H1 (cell line): ENCODE measurements at regions of chr1 and their contacts with region 1.

Region 1: GRCh38 chr1:203267347-203267846 is 37.9 kb upstream of the BTG2 start:
- DNase-seq: peak; percentile 50 to 89
- H3K4me3 ChIP-seq: peak overlapping the region; percentile 50 to 70 (median 56)
- H3K27ac ChIP-seq: no peak overlapping the region
- H3K4me1 ChIP-seq: peaks cover 0 to 3% (median 1%) of the 10 kb centered on the region in 4 experiments; a peak in 2 of 7 replicates
- H3K27me3 ChIP-seq: peaks cover 0 to 4% (median 2%) of the 10 kb centered on the region in 4 experiments; a peak in 4 of 7 replicates
- CTCF ChIP-seq: peak; percentile 42 to 90 (median 87)
- EP300 ChIP-seq: no peak
- POLR2A ChIP-seq: no peak
- RAD21 ChIP-seq: peak; percentile 75 to 85

Region 2: GRCh38 chr1:203057911-203058675 is 209.3 kb before region 1 on chr1:
- CTCF ChIA-PET with region 1: interaction called, 48 read pairs
- POLR2A ChIA-PET with region 1: no interaction called
- DNase-seq: no peak
- H3K4me3 ChIP-seq: no peak overlapping the region
- H3K27ac ChIP-seq: no peak overlapping the region
- H3K4me1 ChIP-seq: peaks cover 10 to 23% (median 17%) of the 10 kb centered on the region in 4 experiments
- H3K27me3 ChIP-seq: no peaks in the 10 kb centered on the region
- CTCF ChIP-seq: no peak
- EP300 ChIP-seq: no peak
- POLR2A ChIP-seq: no peak
- RAD21 ChIP-seq: no peak

Region 3: GRCh38 chr1:203117611-203118575 is 149.5 kb before region 1 on chr1:
- CTCF ChIA-PET with region 1: interaction called, 131 read pairs
- POLR2A ChIA-PET with region 1: no interaction called
- DNase-seq: peak; percentile 76 to 93
- H3K4me3 ChIP-seq: peak overlapping the region in 3 of 4 experiments; percentile 25 to 43 (median 32); a peak in 4 of 8 replicates
- H3K27ac ChIP-seq: no peak overlapping the region
- H3K4me1 ChIP-seq: peaks cover 0 to 2% (median under 1%) of the 10 kb centered on the region in 4 experiments; a peak in 1 of 7 replicates
- H3K27me3 ChIP-seq: peaks cover 0 to 6% (median 3%) of the 10 kb centered on the region in 4 experiments; a peak in 4 of 7 replicates
- CTCF ChIP-seq: peak; percentile 83 to 97 (median 92)
- EP300 ChIP-seq: peak in 1 of 2 experiments; percentile 29; a peak in 1 of 3 replicates
- POLR2A ChIP-seq: no peak
- RAD21 ChIP-seq: peak; percentile 98

Region 4: GRCh38 chr1:203166566-203166940 is 100.8 kb before region 1 on chr1:
- CTCF ChIA-PET with region 1: interaction called, 31 read pairs
- POLR2A ChIA-PET with region 1: no interaction called
- DNase-seq: no peak
- H3K4me3 ChIP-seq: no peak overlapping the region
- H3K27ac ChIP-seq: no peak overlapping the region
- H3K4me1 ChIP-seq: no peaks in the 10 kb centered on the region; a peak in 1 of 7 replicates
- H3K27me3 ChIP-seq: no peaks in the 10 kb centered on the region
- CTCF ChIP-seq: peak; percentile 15 to 32 (median 17); a peak in 2 of 4 replicates
- EP300 ChIP-seq: no peak
- POLR2A ChIP-seq: no peak
- RAD21 ChIP-seq: peak; percentile 5 to 23; a peak in 1 of 4 replicates

Region 5: DNA sequence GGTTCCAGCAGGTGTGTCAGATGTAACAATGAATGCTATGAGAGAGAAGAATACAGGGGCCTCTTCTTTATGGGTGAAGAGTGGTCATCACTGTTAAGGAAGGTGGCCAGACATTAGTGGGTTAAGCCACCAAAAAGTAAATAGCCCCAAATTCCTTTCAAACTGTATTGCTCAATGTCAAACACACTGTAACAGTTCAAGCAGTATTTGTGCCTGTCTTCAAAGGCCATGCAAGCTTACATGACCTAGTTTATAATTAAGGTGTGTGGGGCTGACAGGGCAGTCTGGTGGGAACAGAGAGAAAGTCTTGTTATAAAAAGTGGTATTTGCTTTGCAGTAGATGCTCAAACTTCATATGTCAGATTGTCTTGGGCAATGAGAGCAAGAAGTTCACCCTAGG is 56.4 kb before region 1 on chr1:
- CTCF ChIA-PET with region 1: interaction called, 100 read pairs
- POLR2A ChIA-PET with region 1: no interaction called
- DNase-seq: no peak
- H3K4me3 ChIP-seq: no peak overlapping the region
- H3K27ac ChIP-seq: no peak overlapping the region
- H3K4me1 ChIP-seq: peaks cover 0 to 7% (median 3%) of the 10 kb centered on the region in 4 experiments; a peak in 6 of 7 replicates
- H3K27me3 ChIP-seq: no peaks in the 10 kb centered on the region
- CTCF ChIP-seq: no peak
- EP300 ChIP-seq: no peak
- POLR2A ChIP-seq: no peak
- RAD21 ChIP-seq: no peak

Region 6: GRCh38 chr1:203299169-203299568 is 31.8 kb after region 1 on chr1:
- CTCF ChIA-PET with region 1: interaction called, 320 read pairs
- POLR2A ChIA-PET with region 1: no interaction called
- DNase-seq: no peak
- H3K4me3 ChIP-seq: no peak overlapping the region
- H3K27ac ChIP-seq: no peak overlapping the region
- H3K4me1 ChIP-seq: no peaks in the 10 kb centered on the region
- H3K27me3 ChIP-seq: peaks cover 7 to 39% (median 25%) of the 10 kb centered on the region in 4 experiments
- CTCF ChIP-seq: no peak
- EP300 ChIP-seq: no peak
- POLR2A ChIP-seq: no peak
- RAD21 ChIP-seq: no peak

Region 7: DNA sequence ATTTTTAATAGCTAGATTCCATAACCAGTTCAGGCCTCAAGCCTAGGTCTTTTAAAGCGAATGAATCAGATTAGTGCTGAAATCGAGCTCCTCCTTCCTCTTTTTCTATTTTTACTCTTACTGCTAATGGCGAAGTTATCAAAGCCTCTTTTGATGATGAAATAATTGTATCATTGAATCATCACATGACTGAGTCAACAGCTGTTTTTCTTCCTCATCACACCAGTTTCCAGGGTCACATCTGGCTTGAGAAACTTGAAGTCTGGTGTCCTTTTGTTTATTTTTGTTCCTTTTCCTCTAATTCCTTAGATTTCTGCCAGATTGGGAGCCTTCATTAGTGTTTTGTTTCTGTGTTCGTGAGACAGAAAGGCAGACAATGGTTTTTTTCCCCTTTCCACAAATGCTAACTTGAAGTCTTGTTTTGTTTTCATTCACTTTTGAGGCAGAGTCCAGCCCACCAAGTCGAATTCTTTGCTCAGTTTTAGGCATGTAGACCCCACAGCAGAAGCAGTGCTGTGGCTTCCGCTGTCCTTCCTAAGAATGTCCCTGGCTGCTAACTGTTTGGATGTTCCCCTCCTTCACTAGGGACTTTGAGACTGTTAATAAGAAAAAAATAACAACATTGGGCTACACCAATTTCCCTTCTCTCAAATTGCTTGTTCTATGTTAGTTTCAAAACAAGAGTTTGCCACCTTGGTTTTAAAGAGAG is 135.4 kb after region 1 on chr1:
- CTCF ChIA-PET with region 1: no interaction called
- POLR2A ChIA-PET with region 1: no interaction called
- DNase-seq: no peak
- H3K4me3 ChIP-seq: no peak overlapping the region
- H3K27ac ChIP-seq: no peak overlapping the region
- H3K4me1 ChIP-seq: peaks cover 0 to 2% (median 0%) of the 10 kb centered on the region in 4 experiments; a peak in 2 of 7 replicates
- H3K27me3 ChIP-seq: no peaks in the 10 kb centered on the region
- CTCF ChIP-seq: no peak
- EP300 ChIP-seq: no peak
- POLR2A ChIP-seq: no peak
- RAD21 ChIP-seq: no peak